Aorta (tissue), 5 donors: ENCODE measurements at regions of chr5 and their contacts with region 1.

Region 1: GRCh38 chr5:36397901-36398536 is 96.3 kb upstream of the RANBP3L start:
- DNase-seq: no peak
- ATAC-seq: no peak
- H3K4me3 ChIP-seq: no peak overlapping the region
- H3K27ac ChIP-seq: no peak overlapping the region
- H3K4me1 ChIP-seq: peaks cover 0 to 1% of the 10 kb centered on the region in 2 donors
- H3K27me3 ChIP-seq: no peaks in the 10 kb centered on the region

Region 2: GRCh38 chr5:35762368-35762767 is 635.7 kb before region 1 on chr5:
- intact Hi-C with region 1: no loop called
- DNase-seq: no peak
- ATAC-seq: no peak
- H3K4me3 ChIP-seq: no peak overlapping the region
- H3K27ac ChIP-seq: no peak overlapping the region
- H3K4me1 ChIP-seq: no peaks in the 10 kb centered on the region
- H3K27me3 ChIP-seq: peaks cover 0 to 1% of the 10 kb centered on the region in 2 donors

Region 3: GRCh38 chr5:36177715-36178523 is 220.1 kb before region 1 on chr5:
- intact Hi-C with region 1: loop called (anchors 10 kb)
- DNase-seq: no peak
- ATAC-seq: peak; percentile 48
- H3K4me3 ChIP-seq: no peak overlapping the region
- H3K27ac ChIP-seq: no peak overlapping the region
- H3K4me1 ChIP-seq: no peaks in the 10 kb centered on the region
- H3K27me3 ChIP-seq: no peaks in the 10 kb centered on the region

Region 4: GRCh38 chr5:36279054-36279698 is 118.8 kb before region 1 on chr5:
- intact Hi-C with region 1: loop called in 1 of 2 experiments (anchors 10 kb)
- DNase-seq: no peak
- ATAC-seq: no peak
- H3K4me3 ChIP-seq: peak overlapping the region; percentile 14 to 54
- H3K27ac ChIP-seq: peak overlapping the region in 1 of 2 donors; percentile 33
- H3K4me1 ChIP-seq: peaks cover 6 to 11% of the 10 kb centered on the region in 2 donors
- H3K27me3 ChIP-seq: no peaks in the 10 kb centered on the region